GM12878 (cell line): ENCODE measurements at regions of chr10 and their contacts with region 1.

Region 1: GRCh38 chr10:69004821-69005220 is 16.2 kb downstream of the KIFBP start:
- DNase-seq: no peak
- ATAC-seq: peak; percentile 85
- H3K4me3 ChIP-seq: no peak overlapping the region
- H3K27ac ChIP-seq: no peak overlapping the region
- H3K4me1 ChIP-seq: no peaks in the 10 kb centered on the region
- H3K27me3 ChIP-seq: no peaks in the 10 kb centered on the region
- CTCF ChIP-seq: peak; percentile 51 to 69 (median 56); a peak in 5 of 6 replicates
- EP300 ChIP-seq: no peak
- POLR2A ChIP-seq: no peak
- RAD21 ChIP-seq: peak; percentile 94

Region 2: DNA sequence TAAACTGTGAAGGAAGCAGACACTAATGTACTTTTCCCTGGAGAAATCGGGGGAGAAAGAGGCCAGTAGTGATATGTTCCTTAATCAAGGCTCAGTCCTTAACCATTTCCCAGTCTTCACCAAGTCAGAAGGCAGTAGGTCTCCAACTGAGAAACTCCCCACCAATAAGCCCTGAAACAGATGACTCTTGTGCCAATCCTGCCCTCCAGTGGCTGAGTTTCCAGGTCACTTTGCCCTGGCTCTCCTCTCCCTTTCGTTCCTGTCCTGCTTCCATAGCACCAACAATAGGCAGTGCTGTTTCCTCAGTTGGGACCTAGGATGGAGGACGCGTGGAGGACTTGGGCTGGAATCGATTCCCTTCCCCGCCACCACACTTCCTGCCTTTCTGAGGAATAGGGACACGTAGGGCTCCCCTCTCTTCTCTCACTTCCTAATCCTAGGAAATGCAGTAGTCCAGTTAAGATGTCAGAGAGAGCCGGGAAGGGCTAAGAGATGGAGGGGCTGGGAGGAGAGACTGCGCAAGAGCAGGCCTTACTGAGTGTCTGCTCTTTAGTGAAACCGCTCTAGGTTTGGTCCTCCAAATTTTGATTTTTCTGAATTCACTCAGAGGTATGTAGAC is 796.3 kb before region 1 on chr10:
- CTCF ChIA-PET with region 1: no interaction called
- POLR2A ChIA-PET with region 1: no interaction called
- RAD21 ChIA-PET with region 1: no interaction called
- SMC1A ChIA-PET with region 1: no interaction called
- in situ Hi-C with region 1: no loop called
- intact Hi-C with region 1: no loop called
- DNase-seq: peak; percentile 20
- ATAC-seq: peak; percentile 89
- H3K4me3 ChIP-seq: no peak overlapping the region
- H3K27ac ChIP-seq: no peak overlapping the region
- H3K4me1 ChIP-seq: no peaks in the 10 kb centered on the region; the same call in 1 of the 2 replicates
- H3K27me3 ChIP-seq: no peaks in the 10 kb centered on the region
- CTCF ChIP-seq: peak; percentile 56 to 73 (median 58)
- EP300 ChIP-seq: no peak
- POLR2A ChIP-seq: no peak
- RAD21 ChIP-seq: peak; percentile 63

Region 3: DNA sequence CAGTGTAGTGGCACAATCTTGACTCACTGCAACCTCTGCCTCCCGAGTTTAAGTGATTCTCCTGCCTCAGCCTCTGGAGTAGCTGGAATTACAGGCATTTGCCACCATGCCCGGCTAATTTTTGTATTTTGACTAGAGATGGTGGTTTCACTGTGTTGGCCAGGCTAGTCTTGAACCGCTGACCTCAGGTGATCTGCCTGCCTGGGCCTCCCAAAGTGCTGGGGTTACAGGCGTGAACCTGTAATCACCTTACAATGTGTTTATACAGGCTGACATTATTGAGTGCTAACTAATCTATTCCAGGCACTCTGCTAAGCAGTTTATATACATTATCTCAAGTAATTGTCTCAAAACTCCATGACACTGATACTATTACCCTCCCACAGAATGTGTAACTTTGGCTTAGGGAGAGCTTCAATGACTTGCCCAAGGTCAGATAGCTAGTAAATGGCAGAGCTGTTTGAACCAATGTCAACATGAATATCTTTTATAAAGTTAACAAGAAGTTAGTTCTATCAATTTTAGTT is 20.6 kb after region 1 on chr10:
- CTCF ChIA-PET with region 1: interaction called, 12 read pairs
- POLR2A ChIA-PET with region 1: interaction called, 5 read pairs
- RAD21 ChIA-PET with region 1: interaction called, 8 read pairs
- SMC1A ChIA-PET with region 1: interaction called, 25 read pairs
- in situ Hi-C with region 1: no loop called
- intact Hi-C with region 1: no loop called
- DNase-seq: no peak
- ATAC-seq: no peak
- H3K4me3 ChIP-seq: no peak overlapping the region
- H3K27ac ChIP-seq: no peak overlapping the region
- H3K4me1 ChIP-seq: peaks cover 16% of the 10 kb centered on the region
- H3K27me3 ChIP-seq: no peaks in the 10 kb centered on the region
- CTCF ChIP-seq: no peak
- EP300 ChIP-seq: no peak
- POLR2A ChIP-seq: no peak
- RAD21 ChIP-seq: no peak

Region 4: DNA sequence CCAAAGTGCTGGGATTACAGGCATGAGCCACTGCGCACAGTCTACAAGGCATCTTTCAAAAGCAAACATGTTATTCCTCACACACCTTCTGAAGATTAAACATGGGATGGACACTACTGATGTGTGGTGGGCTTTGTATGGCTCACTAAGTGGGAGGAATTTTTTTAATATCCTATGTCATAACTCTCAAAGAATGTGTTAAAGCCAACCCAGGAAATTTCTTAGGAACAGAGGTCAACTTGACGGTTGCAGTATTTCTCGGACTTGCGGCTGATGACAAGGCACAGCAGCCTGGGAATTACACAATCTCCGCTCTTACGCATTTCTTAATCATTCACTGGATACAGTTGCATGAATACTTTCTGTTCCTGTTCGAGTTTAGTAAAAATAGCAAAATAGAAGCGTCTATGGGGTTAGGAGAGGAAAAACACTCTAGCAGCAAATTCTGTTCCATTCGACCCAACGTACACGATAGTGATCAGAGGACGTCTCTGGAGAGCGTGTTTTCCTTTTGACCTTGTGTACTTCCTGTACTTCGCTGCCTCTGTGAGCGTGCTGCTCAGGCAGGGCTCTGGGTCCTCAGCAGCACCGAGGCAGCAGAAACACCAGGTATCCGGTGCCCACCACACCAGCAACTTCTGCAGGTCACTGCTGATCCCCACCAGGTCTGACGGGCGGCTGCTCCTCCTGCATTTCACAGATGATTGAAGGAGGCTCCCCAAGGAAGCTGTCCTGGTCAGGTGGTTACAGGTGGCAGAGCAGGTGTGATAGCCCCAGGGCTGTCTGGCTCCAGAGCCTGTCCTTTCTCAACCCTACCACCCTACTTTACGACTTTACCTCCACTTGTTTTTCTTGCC is 56.7 kb after region 1 on chr10:
- CTCF ChIA-PET with region 1: interaction called, 50 read pairs
- POLR2A ChIA-PET with region 1: interaction called, 11 read pairs
- RAD21 ChIA-PET with region 1: interaction called, 34 read pairs
- SMC1A ChIA-PET with region 1: interaction called, 34 read pairs
- in situ Hi-C with region 1: no loop called
- intact Hi-C with region 1: no loop called
- DNase-seq: no peak
- ATAC-seq: peak; percentile 65
- H3K4me3 ChIP-seq: peak overlapping the region; percentile 44; the same call in 1 of the 2 replicates
- H3K27ac ChIP-seq: peak overlapping the region; percentile 74
- H3K4me1 ChIP-seq: peaks cover 49% of the 10 kb centered on the region
- H3K27me3 ChIP-seq: no peaks in the 10 kb centered on the region
- CTCF ChIP-seq: no peak
- EP300 ChIP-seq: peak in 1 of 2 experiments; percentile 70; a peak in 2 of 4 replicates
- POLR2A ChIP-seq: peak; percentile 67
- RAD21 ChIP-seq: no peak

Region 5: GRCh38 chr10:69101451-69102095 is 96.8 kb after region 1 on chr10:
- CTCF ChIA-PET with region 1: interaction called, 272 read pairs
- POLR2A ChIA-PET with region 1: interaction called, 25 read pairs
- RAD21 ChIA-PET with region 1: interaction called, 252 read pairs
- SMC1A ChIA-PET with region 1: interaction called, 269 read pairs
- in situ Hi-C with region 1: loop called (anchors 10 kb)
- intact Hi-C with region 1: no loop called
- DNase-seq: no peak
- ATAC-seq: peak; percentile 7
- H3K4me3 ChIP-seq: no peak overlapping the region
- H3K27ac ChIP-seq: no peak overlapping the region
- H3K4me1 ChIP-seq: peaks cover 14% of the 10 kb centered on the region
- H3K27me3 ChIP-seq: no peaks in the 10 kb centered on the region
- CTCF ChIP-seq: no peak
- EP300 ChIP-seq: no peak
- POLR2A ChIP-seq: no peak
- RAD21 ChIP-seq: no peak

Region 6: GRCh38 chr10:69130251-69130650 is 125.4 kb after region 1 on chr10:
- CTCF ChIA-PET with region 1: interaction called, 21 read pairs
- POLR2A ChIA-PET with region 1: interaction called, 7 read pairs
- RAD21 ChIA-PET with region 1: interaction called, 8 read pairs
- SMC1A ChIA-PET with region 1: interaction called, 20 read pairs
- in situ Hi-C with region 1: no loop called
- intact Hi-C with region 1: no loop called
- DNase-seq: no peak
- ATAC-seq: peak; percentile 43
- H3K4me3 ChIP-seq: no peak overlapping the region; the same call in 1 of the 2 replicates
- H3K27ac ChIP-seq: no peak overlapping the region
- H3K4me1 ChIP-seq: peaks cover 4% of the 10 kb centered on the region; the same call in 1 of the 2 replicates
- H3K27me3 ChIP-seq: no peaks in the 10 kb centered on the region
- CTCF ChIP-seq: no peak
- EP300 ChIP-seq: no peak
- POLR2A ChIP-seq: no peak
- RAD21 ChIP-seq: no peak

Region 7: DNA sequence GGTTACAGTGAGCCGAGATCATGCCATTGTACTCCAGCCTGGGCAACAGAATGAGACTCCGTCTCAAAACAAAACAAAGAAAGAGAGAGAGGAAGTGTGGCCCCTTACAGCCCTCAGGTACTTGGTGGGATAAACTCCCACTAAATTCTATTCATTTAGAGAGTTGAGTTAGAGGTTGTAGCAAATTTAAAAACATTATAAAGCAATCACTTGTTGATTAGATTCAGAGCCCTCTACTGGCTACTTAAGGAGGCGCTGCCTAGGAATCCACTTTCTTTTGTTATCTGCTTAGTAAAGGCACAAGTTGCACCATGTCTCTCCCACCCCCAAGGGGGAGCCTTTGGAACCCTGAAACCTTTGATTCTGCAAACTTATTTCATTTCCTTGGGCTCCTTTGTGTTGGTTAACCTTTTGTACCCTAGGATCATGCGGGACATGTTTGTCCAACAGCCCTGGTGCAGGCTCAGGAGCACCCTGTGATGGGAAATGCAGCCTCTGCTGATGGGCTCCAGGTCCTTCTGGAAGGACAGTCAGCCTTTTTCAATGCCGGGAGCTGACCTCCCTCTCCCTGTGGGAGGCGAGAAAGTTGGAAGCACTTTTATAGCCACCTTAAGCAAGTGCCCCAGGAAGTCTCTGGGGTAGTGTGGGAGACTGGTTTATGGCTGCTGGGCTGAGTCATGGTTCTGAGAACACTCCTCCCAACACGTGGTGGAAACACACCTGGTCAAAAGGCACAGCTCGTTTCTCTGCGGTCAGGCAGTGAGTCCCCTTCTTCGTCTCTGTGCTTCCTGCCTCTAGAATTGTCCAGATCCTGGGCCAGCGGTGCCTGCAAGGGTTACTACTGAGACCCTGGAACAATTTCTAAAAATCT is 217.6 kb after region 1 on chr10:
- CTCF ChIA-PET with region 1: interaction called, 40 read pairs
- POLR2A ChIA-PET with region 1: no interaction called
- RAD21 ChIA-PET with region 1: interaction called, 8 read pairs
- SMC1A ChIA-PET with region 1: interaction called, 33 read pairs
- in situ Hi-C with region 1: no loop called
- intact Hi-C with region 1: loop called (anchors 5 kb)
- DNase-seq: peak; percentile 88
- ATAC-seq: peak; percentile 97
- H3K4me3 ChIP-seq: peak overlapping the region; percentile 63
- H3K27ac ChIP-seq: peak overlapping the region; percentile 80
- H3K4me1 ChIP-seq: peaks cover 25% of the 10 kb centered on the region
- H3K27me3 ChIP-seq: no peaks in the 10 kb centered on the region
- CTCF ChIP-seq: peak; percentile 71 to 82 (median 77)
- EP300 ChIP-seq: peak; percentile 83 to 86
- POLR2A ChIP-seq: peak; percentile 69
- RAD21 ChIP-seq: peak; percentile 62

Region 8: GRCh38 chr10:69375307-69376151 is 370.7 kb after region 1 on chr10:
- CTCF ChIA-PET with region 1: no interaction called
- POLR2A ChIA-PET with region 1: no interaction called
- RAD21 ChIA-PET with region 1: no interaction called
- SMC1A ChIA-PET with region 1: no interaction called
- in situ Hi-C with region 1: no loop called
- intact Hi-C with region 1: no loop called
- DNase-seq: no peak
- ATAC-seq: no peak
- H3K4me3 ChIP-seq: no peak overlapping the region
- H3K27ac ChIP-seq: no peak overlapping the region
- H3K4me1 ChIP-seq: peaks cover 3% of the 10 kb centered on the region; the same call in 1 of the 2 replicates
- H3K27me3 ChIP-seq: no peaks in the 10 kb centered on the region
- CTCF ChIP-seq: no peak
- EP300 ChIP-seq: no peak
- POLR2A ChIP-seq: no peak
- RAD21 ChIP-seq: no peak